SK-N-SH (cell line): ENCODE measurements at regions of chr4 and their contacts with region 1.

Region 1: GRCh38 chr4:87150498-87151261 is 69.7 kb downstream of the KLHL8 start:
- DNase-seq: peak; percentile 57
- H3K4me3 ChIP-seq: no peak overlapping the region
- H3K27ac ChIP-seq: no peak overlapping the region
- H3K4me1 ChIP-seq: no peaks in the 10 kb centered on the region
- H3K27me3 ChIP-seq: no peaks in the 10 kb centered on the region
- CTCF ChIP-seq: peak; percentile 90
- EP300 ChIP-seq: no peak
- RAD21 ChIP-seq: peak; percentile 93

Region 2: DNA sequence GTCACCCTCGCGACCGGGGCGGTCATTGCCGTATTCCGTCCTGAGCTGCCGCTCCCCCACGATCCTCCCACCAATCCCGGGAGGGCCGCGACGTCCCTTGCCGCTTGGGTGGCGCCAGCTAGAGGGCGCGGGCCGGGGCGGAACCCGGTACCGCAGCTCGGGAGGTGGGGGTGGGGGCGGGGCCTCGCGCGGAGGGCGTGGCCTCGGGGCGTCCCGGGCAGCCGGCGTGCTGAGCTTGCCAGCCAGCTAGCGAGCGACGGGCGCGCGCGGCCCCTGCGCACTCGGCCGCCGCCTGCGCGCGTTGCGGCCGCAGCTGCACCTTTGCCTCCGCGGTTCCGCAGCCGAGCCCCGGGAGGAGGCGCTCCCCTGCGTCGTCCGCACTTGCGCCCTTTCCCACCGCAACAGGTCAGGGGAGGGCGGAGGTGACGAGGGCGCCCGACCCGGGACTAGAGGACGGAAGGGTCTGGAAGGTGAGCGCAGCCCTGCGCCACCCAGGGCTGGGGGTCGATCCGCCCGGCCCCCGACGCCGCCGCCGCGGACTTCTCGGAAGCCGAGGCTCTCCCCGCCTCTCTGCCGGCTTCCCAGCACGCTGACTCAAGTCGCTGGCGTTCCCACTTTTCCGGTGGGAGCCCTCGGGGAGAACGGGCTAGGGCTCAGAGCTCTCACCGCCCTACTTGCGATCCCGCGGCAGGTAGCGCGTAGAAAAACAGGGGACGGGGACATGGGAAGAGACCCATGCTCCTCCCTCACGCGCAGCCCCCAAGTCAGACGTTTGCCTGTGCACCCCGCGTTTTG is 215.7 kb before region 1 on chr4 and contains the start of gene AFF1:
- CTCF ChIA-PET with region 1: no interaction called
- POLR2A ChIA-PET with region 1: no interaction called
- DNase-seq: peak; percentile 98
- H3K4me3 ChIP-seq: peak within 1 kb of the TSS; percentile 71 to 84
- H3K27ac ChIP-seq: peak within 1 kb of the TSS; percentile 77 to 78
- H3K4me1 ChIP-seq: peaks cover 4 to 11% of the 10 kb centered on the region in 2 experiments; a peak in 3 of 4 replicates
- H3K27me3 ChIP-seq: no peaks in the 10 kb centered on the region
- CTCF ChIP-seq: peak; percentile 38
- EP300 ChIP-seq: no peak
- RAD21 ChIP-seq: peak; percentile 9
- polyA plus RNA-seq, gene AFF1: 2.2 and 2.7 TPM in 2 replicates

Region 3: GRCh38 chr4:87133183-87133582 is 17.5 kb before region 1 on chr4:
- CTCF ChIA-PET with region 1: interaction called, 23 read pairs
- POLR2A ChIA-PET with region 1: no interaction called
- DNase-seq: no peak
- H3K4me3 ChIP-seq: no peak overlapping the region
- H3K27ac ChIP-seq: no peak overlapping the region
- H3K4me1 ChIP-seq: no peaks in the 10 kb centered on the region
- H3K27me3 ChIP-seq: no peaks in the 10 kb centered on the region
- CTCF ChIP-seq: no peak
- EP300 ChIP-seq: no peak
- RAD21 ChIP-seq: no peak

Region 4: DNA sequence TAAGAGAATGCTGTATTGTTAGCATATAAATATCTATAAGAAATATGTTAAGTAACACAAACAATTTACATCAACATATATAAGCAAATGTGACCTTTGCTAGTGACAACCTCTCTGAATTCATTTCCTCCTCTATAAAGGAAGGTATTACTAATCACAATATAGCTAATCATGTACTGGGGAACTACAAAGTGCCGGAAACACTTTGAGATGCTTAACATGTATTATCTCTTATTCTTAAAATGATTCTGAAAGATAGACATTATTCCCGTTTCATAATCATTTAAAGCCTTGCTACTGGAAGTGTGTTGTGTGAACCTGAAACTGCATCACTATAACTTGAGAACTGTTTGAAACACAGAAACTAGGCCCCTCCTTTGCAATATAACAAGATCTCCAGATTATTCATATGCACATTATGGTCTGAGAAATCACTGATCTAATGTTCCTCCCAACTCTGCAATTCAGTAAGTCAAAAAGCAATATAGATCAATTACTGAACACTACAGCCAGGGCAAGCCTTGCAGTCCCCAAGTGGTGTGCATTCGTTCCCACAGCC is 15.7 kb after region 1 on chr4:
- CTCF ChIA-PET with region 1: interaction called, 19 read pairs
- POLR2A ChIA-PET with region 1: no interaction called
- DNase-seq: no peak
- H3K4me3 ChIP-seq: no peak overlapping the region
- H3K27ac ChIP-seq: no peak overlapping the region
- H3K4me1 ChIP-seq: no peaks in the 10 kb centered on the region
- H3K27me3 ChIP-seq: no peaks in the 10 kb centered on the region
- CTCF ChIP-seq: no peak
- EP300 ChIP-seq: no peak
- RAD21 ChIP-seq: no peak

Region 5: DNA sequence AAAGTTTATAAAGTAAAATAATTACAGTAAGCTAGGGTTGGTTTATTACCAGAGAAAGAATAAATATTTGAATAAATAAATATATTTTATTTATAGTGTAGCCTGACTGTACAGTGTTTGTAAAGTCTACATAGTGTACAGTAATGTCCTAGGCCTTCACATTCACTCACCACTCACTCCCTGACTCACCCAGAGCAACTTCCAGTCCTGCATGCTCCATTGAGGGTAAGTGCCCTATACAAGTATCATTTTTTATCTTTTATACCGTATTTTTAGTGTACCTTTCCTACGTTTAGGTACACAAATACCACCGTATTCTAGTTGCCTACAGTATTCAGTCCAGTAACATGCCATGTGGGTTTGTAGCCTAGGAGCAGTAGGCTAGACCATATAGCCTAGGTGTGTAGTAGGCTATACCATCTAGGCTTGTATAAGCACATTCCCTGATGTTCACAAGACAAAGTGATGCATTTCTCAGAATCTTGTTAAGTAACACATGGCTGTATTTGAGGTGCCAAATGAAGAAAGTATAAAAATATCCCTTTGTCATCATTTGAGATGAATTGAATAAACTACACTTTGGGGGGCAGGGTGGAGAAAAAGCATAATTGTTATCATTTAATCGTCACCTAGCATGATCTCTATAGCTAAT is 84.5 kb after region 1 on chr4:
- CTCF ChIA-PET with region 1: interaction called, 111 read pairs
- POLR2A ChIA-PET with region 1: no interaction called
- DNase-seq: no peak
- H3K4me3 ChIP-seq: peak overlapping the region; percentile 40 to 63
- H3K27ac ChIP-seq: no peak overlapping the region
- H3K4me1 ChIP-seq: peaks cover 0 to 14% of the 10 kb centered on the region in 2 experiments; a peak in 1 of 4 replicates
- H3K27me3 ChIP-seq: no peaks in the 10 kb centered on the region
- CTCF ChIP-seq: no peak
- EP300 ChIP-seq: no peak
- RAD21 ChIP-seq: no peak

Region 6: DNA sequence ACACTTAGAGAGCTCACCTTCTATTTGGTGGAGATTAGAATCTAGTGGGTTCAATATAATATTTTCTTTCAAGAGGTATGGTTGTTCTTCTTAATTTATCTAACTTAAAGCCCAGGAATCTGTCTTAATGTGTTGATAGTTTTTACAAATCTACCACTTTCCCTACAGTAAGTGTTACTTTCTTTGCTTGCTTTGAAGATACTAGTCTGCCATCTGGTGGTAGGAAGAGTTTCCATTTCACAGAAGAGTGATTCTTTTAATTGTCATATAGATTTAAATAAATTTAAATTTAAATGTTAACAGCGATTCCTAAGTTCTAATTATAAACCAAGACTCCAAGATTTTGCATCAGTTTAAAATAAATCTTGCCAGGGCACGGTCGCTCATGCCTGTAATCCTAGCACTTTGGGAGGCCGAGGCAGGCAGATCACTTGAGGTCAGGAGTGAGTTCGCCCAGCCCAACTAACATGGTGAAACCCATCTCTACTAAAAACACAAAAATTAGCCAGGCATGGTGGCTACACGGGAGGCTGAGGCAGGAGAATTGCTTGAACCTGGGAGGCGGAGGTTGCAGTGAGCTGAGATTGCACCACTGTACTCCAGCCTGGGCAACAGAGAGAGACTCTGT is 315.2 kb after region 1 on chr4:
- CTCF ChIA-PET with region 1: interaction called, 19 read pairs
- POLR2A ChIA-PET with region 1: no interaction called
- DNase-seq: peak; percentile 41
- H3K4me3 ChIP-seq: no peak overlapping the region; a peak in 1 of 4 replicates
- H3K27ac ChIP-seq: no peak overlapping the region
- H3K4me1 ChIP-seq: no peaks in the 10 kb centered on the region
- H3K27me3 ChIP-seq: no peaks in the 10 kb centered on the region
- CTCF ChIP-seq: peak; percentile 79
- EP300 ChIP-seq: no peak
- RAD21 ChIP-seq: peak; percentile 84